ENCODE measurements at regions of chr4 and their contacts with region 1.

Region 1: DNA sequence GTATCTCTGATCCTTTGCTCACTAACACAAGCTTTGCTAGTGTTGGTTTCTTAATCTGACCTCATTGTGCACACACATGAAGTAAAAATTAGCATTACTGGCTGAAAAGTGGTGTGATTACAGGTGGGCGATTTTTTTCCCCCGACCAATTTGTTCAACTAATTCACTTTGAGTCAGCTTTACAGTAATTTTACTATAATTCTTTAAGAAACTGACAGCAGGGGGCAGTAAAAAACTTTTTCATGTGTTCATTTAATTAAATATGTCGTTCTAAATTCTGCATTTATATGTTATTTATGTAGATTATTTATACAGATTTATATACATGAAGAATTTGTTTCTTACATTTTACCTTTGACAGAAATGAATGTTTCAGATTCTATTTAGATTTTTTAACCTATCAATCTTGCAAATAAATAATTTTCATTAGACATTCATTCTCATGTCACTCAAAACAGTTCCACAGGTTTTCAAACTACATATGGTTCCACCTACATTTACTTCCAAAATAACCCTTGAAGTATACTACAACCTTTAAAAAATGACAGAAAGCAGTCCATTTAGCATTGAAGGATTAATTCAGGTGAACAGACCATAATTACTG is 17.5 kb downstream of the PALLD start:
- DNase-seq: no peak
- H3K4me3 Mint-ChIP-seq: no peak overlapping the region
- H3K27ac Mint-ChIP-seq: no peak overlapping the region
- H3K4me1 Mint-ChIP-seq: peaks cover 30% of the 10 kb centered on the region
- H3K27me3 Mint-ChIP-seq: peaks cover 16% of the 10 kb centered on the region

Region 2: DNA sequence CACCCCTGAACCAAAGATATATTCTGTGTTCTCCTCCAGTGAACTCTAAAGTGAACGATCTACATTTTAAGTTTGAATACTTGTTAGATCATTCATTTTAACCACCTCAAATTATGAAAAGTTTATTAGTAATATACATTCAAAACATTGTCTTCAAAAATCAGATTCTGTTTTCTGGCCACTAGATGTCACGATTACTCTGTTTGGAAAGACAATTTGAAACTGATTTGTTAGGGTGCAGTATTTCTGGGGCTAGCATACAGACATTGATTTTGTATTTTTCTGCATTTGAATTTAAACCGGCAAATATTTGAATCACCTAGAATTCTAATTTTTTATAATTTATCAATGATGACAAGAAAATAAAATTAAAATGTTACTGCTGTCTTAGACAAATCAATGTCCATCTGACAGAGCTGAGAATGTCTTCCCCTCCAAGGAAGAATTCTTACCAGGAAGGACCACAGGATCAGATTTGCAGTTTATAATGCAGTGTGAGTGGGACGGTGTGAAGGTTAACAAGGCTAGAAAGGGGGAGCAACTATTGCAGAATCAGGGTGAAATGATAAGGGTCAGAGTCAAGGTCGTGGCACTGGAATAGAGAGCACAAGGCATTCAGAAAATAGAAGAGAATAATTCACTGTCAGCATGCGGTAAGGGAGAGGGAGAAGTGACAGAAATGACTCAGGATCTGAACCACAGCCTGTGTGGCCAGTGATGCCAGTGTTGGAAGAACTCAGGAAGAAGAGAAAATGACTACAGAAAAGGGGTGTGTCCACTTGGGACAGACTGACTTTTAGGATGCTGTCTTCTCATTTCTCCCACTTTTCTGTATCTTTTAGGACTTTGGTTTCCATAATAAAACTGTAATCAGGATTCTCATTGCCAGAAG is 330.4 kb before region 1 on chr4:
- intact Hi-C with region 1: loop called (anchors 1 kb)
- DNase-seq: no peak
- H3K4me3 Mint-ChIP-seq: no peak overlapping the region
- H3K27ac Mint-ChIP-seq: no peak overlapping the region
- H3K4me1 Mint-ChIP-seq: peaks cover 5% of the 10 kb centered on the region
- H3K27me3 Mint-ChIP-seq: no peaks in the 10 kb centered on the region

Region 3: DNA sequence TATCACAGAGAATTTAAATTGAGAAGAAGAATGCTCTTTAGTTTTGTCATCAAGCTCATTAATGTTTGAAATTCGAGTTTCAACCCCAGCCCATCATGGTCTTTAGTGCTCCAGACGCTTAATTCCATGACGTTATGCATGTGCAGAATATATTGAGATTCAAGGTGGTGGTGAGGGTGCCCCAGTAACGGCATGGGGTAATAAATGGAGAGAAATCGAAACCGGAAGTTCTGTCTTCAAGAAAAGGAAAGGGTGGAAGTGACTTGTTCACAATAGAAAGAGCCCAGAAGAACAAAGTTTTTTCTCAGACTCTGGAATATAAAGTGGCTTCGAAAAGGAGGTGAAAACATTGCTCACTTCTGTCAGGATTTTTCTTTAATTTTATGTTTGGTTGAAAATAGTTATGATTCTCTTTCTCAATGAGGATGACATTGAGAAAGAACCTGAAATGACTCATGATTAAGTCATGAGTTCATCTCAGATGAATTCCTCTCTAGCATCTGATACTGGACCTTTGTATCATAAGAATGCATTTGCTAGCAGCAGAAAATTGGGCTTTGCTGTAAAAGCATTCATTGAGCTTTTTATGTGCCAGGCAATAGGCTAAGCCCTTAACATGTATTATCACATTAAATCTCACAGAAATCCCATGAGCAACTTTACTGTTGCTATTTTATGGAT is 33.3 kb before region 1 on chr4:
- intact Hi-C with region 1: loop called (anchors 1 kb)
- DNase-seq: peak; percentile 47
- H3K4me3 Mint-ChIP-seq: peak overlapping the region; percentile 89
- H3K27ac Mint-ChIP-seq: peak overlapping the region; percentile 98
- H3K4me1 Mint-ChIP-seq: peaks cover 58% of the 10 kb centered on the region
- H3K27me3 Mint-ChIP-seq: peaks cover 2% of the 10 kb centered on the region

Region 4: GRCh38 chr4:168585168-168586091 is 71.1 kb after region 1 on chr4:
- intact Hi-C with region 1: loop called (anchors 2 kb)
- DNase-seq: no peak
- H3K4me3 Mint-ChIP-seq: no peak overlapping the region
- H3K27ac Mint-ChIP-seq: no peak overlapping the region
- H3K4me1 Mint-ChIP-seq: peaks cover 5% of the 10 kb centered on the region
- H3K27me3 Mint-ChIP-seq: peaks cover 19% of the 10 kb centered on the region

Region 5: GRCh38 chr4:168674077-168674747 is 159.9 kb after region 1 on chr4:
- intact Hi-C with region 1: no loop called
- DNase-seq: no peak
- H3K4me3 Mint-ChIP-seq: no peak overlapping the region
- H3K27ac Mint-ChIP-seq: no peak overlapping the region
- H3K4me1 Mint-ChIP-seq: no peaks in the 10 kb centered on the region
- H3K27me3 Mint-ChIP-seq: no peaks in the 10 kb centered on the region

Region 6: GRCh38 chr4:168831919-168832762 is 317.8 kb after region 1 on chr4:
- intact Hi-C with region 1: loop called (anchors 2 kb)
- DNase-seq: peak; percentile 51
- H3K4me3 Mint-ChIP-seq: peak overlapping the region; percentile 84
- H3K27ac Mint-ChIP-seq: peak overlapping the region; percentile 55
- H3K4me1 Mint-ChIP-seq: peaks cover 18% of the 10 kb centered on the region
- H3K27me3 Mint-ChIP-seq: peaks cover 46% of the 10 kb centered on the region

Region 7: DNA sequence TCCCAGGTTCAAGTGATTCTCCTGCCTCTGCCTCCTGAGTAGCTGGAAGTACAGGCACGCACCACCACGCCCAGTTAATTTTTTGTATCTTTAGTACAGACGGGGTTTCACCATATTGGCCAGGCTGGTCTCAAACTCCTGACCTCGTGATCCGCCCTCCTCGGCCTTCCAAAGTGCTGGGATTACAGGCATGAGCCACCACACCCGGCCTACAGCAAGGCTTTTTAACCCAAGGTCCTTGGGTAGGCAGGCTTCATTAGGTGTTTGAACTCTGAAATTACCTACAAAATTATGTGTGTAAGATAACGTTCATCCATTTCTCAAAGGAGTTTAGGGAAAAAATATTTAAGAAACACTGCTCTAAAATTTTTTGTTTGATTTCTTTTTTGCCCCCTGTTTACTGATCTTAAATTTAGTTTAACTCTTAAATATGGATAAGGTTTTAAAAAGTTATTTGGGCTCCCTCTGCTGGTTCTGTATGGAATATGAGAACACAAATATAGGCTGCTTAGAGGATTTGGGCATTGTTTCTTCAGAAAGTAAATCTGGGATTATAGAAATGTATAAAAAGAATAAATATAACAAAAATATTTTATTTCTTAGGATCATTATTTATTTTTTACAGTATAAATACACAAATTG is 402.9 kb after region 1 on chr4:
- intact Hi-C with region 1: loop called (anchors 1 kb)
- DNase-seq: no peak
- H3K4me3 Mint-ChIP-seq: no peak overlapping the region
- H3K27ac Mint-ChIP-seq: no peak overlapping the region
- H3K4me1 Mint-ChIP-seq: no peaks in the 10 kb centered on the region
- H3K27me3 Mint-ChIP-seq: peaks cover 2% of the 10 kb centered on the region

Region 8: DNA sequence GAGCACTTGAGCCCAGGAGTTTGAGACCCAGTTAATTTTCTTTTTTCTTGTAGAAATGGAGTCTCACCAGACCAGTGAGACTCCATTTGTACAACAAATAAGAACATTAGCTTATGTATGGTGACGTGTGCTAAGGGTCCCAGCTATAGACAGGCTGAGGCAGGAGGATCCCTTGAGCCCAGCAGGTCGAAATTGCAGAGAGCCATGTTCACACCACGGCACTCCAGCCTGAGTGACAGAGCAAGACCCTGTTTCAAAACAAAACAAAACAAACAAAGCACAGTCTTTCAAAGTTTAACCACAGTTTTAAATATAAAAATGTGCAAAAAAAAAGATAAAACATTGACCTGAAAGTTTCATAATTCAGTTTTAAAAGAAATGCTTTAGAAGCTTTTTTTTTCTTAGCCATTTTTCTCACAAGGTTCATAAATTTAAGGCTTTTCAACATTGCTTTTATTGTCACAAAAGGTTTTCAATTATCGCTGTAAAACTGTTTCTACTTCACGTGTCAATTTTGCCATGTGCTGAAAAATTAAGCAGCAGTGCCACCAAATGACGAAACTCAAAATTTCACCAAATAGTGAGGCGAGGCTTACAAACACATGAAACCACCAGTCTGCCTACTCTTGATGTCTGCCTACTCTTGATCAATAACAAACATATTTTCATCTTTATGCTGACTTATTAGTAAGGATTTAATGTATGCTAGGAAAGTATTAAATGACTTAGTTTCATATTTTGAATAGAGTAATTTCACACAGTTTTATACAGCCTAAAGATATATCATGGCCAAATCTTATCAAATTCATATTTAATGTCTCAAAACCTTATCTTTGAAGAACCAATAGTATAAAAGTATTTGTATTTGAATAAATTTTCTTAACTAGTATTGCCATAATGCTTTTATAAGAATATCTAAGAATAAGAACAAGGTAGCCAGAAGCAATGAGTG is 971.7 kb after region 1 on chr4:
- intact Hi-C with region 1: loop called (anchors 1 kb)
- DNase-seq: peak; percentile 5
- H3K4me3 Mint-ChIP-seq: no peak overlapping the region
- H3K27ac Mint-ChIP-seq: no peak overlapping the region
- H3K4me1 Mint-ChIP-seq: no peaks in the 10 kb centered on the region
- H3K27me3 Mint-ChIP-seq: no peaks in the 10 kb centered on the region

Region 9: DNA sequence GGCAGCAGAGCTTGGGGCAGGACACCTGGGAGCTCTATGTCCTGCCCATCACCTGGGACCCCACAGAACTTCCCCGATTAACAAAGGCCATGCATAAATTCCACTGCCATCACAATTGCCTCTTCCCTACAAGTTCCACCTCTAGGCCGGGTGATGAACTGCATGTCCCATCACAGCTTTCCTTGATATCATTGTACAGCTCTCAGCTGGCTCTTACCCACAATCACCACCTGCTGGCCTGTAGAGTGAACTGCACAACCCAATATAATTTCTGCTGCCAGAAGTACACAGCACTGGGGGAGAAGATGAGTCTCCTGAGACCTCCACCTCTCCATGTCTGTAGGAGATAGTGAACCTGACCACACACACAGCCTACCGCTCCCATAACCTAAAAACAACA is 1860.4 kb after region 1 on chr4:
- intact Hi-C with region 1: no loop called
- DNase-seq: no peak
- H3K4me3 Mint-ChIP-seq: no peak overlapping the region
- H3K27ac Mint-ChIP-seq: no peak overlapping the region
- H3K4me1 Mint-ChIP-seq: no peaks in the 10 kb centered on the region
- H3K27me3 Mint-ChIP-seq: no peaks in the 10 kb centered on the region

Measured in activated T-helper 1 cell treated with anti-CD3 and anti-CD28 coated beads, Interleukin-12 subunit alpha, Interleukin-12 subunit beta, Interleukin-2, Interleukin-4 antibody, amounts not matched to agents 30 ng/mL and 10 ng/mL and 1 ng/mL, durations not matched to agents 14 hours and 24 hours and 36 hours (primary cell).